Naive thymus-derived CD4-positive, alpha-beta T cell (primary cell): ENCODE measurements at regions of chr20 and their contacts with region 1.

Region 1: GRCh38 chr20:58236612-58237330 is 8.3 kb upstream of the ANKRD60 start:
- DNase-seq: peak; percentile 62 to 90 (median 80)
- ATAC-seq: peak; percentile 96
- H3K4me3 ChIP-seq: peak overlapping the region; percentile 65
- H3K4me3 Mint-ChIP-seq: peak overlapping the region; percentile 77 to 94 (median 92)
- H3K27ac ChIP-seq: peak overlapping the region; percentile 76
- H3K27ac Mint-ChIP-seq: peak overlapping the region; percentile 71 to 96 (median 91)
- H3K4me1 ChIP-seq: no peaks in the 10 kb centered on the region
- H3K4me1 Mint-ChIP-seq: peaks cover 2 to 25% (median 17%) of the 10 kb centered on the region in 7 donors
- H3K27me3 ChIP-seq: no peaks in the 10 kb centered on the region
- H3K27me3 Mint-ChIP-seq: no peaks in the 10 kb centered on the region

Region 2: GRCh38 chr20:58361481-58362205 is 124.9 kb after region 1 on chr20:
- CTCF ChIA-PET with region 1: no interaction called
- POLR2A ChIA-PET with region 1: no interaction called
- intact Hi-C with region 1: loop called in 1 of 2 experiments (anchors 5 kb)
- DNase-seq: no peak
- ATAC-seq: no peak
- H3K4me3 ChIP-seq: no peak overlapping the region
- H3K4me3 Mint-ChIP-seq: no peak overlapping the region
- H3K27ac ChIP-seq: no peak overlapping the region
- H3K27ac Mint-ChIP-seq: peak overlapping the region in 2 of 9 donors; percentile 6 to 52
- H3K4me1 ChIP-seq: no peaks in the 10 kb centered on the region
- H3K4me1 Mint-ChIP-seq: no peaks in the 10 kb centered on the region
- H3K27me3 ChIP-seq: no peaks in the 10 kb centered on the region
- H3K27me3 Mint-ChIP-seq: no peaks in the 10 kb centered on the region

Region 3: DNA sequence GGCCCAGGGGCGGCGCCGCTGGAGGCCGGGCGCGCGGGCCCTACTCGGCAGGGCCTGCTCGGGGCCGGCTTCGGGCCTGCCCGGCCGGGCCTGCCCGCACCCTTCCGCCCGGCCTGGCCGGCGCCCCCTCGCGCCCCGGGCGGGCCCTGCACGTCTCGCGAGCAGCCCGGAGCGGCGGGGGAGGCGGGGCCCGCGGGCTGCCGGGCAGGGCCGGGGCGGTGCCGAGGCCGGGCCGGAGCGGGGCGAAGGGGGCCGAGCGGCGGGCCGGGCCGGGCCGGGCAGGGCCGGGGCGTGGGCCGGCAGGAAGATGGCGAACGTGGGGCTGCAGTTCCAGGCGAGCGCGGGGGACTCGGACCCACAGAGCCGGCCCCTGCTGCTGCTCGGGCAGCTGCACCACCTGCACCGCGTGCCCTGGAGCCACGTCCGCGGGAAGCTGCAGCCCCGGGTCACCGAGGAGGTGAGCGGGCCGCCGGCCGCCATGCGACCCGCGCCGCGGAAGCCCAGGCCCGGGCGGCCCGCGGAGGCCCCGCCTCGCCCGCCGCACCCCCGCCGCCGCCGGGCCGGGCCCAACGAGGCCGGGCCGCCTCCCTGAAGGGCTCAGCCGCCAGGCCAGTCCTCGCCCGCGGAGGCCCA is 455.9 kb after region 1 on chr20 and contains the start of gene NPEPL1:
- CTCF ChIA-PET with region 1: no interaction called
- POLR2A ChIA-PET with region 1: interaction called, 3 read pairs
- intact Hi-C with region 1: loop called in 1 of 2 experiments (anchors 2 kb)
- DNase-seq: peak; percentile 37 to 85 (median 55)
- ATAC-seq: peak; percentile 93
- H3K4me3 ChIP-seq: peak within 1 kb of the TSS; percentile 19
- H3K4me3 Mint-ChIP-seq: peak within 1 kb of the TSS; percentile 58 to 89 (median 81)
- H3K27ac ChIP-seq: peak within 1 kb of the TSS; percentile 68
- H3K27ac Mint-ChIP-seq: peak within 1 kb of the TSS; percentile 63 to 87 (median 80)
- H3K4me1 ChIP-seq: peaks cover 4 to 7% of the 10 kb centered on the region in 2 donors
- H3K4me1 Mint-ChIP-seq: peaks cover 4 to 19% (median 10%) of the 10 kb centered on the region in 7 donors
- H3K27me3 ChIP-seq: no peaks in the 10 kb centered on the region
- H3K27me3 Mint-ChIP-seq: no peaks in the 10 kb centered on the region
- total RNA-seq, gene NPEPL1: 32.8 to 76.2 (median 50.5) TPM

Region 4: DNA sequence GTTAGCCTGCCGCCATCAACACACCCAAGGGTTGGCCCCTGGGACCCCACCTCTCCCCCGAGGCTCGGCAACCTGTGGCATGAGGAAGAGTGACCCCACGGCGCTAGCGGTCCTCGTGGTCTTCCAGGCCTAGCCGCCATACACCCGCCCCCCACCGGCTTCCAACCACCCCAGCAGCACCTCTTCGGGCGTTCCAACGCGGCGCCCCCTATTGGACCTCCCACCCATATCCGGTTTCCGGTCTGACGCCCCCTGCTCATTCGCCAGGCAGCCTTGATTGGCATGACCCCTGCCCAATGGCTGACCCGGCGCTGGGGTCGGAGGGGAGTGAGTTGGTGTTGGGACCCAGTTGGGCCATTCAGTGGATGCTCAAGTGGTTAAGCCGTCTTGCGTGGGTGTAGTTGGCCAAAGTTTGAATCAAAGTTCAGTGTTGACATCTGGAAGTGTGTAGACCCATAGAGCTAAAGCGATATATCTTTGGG is 614.0 kb after region 1 on chr20 and contains the start of gene GNAS-AS1:
- CTCF ChIA-PET with region 1: no interaction called
- POLR2A ChIA-PET with region 1: no interaction called
- intact Hi-C with region 1: loop called in 1 of 2 experiments (anchors 1 kb)
- DNase-seq: peak; percentile 57 to 81 (median 78)
- ATAC-seq: peak; percentile 87
- H3K4me3 ChIP-seq: peak within 1 kb of the TSS; percentile 61
- H3K4me3 Mint-ChIP-seq: peak within 1 kb of the TSS; percentile 83 to 95 (median 92)
- H3K27ac ChIP-seq: no peak within 1 kb of the TSS
- H3K27ac Mint-ChIP-seq: peak within 1 kb of the TSS in 4 of 9 donors; percentile 19 to 81 (median 54)
- H3K4me1 ChIP-seq: no peaks in the 10 kb centered on the region
- H3K4me1 Mint-ChIP-seq: peaks cover 11 to 36% (median 30%) of the 10 kb centered on the region in 7 donors
- H3K27me3 ChIP-seq: peaks cover 0 to 10% of the 10 kb centered on the region in 2 donors
- H3K27me3 Mint-ChIP-seq: peaks cover 21 to 67% (median 27%) of the 10 kb centered on the region in 5 donors
- total RNA-seq, gene GNAS-AS1: 0.13 to 2.0 (median 1.5) TPM

Region 5: DNA sequence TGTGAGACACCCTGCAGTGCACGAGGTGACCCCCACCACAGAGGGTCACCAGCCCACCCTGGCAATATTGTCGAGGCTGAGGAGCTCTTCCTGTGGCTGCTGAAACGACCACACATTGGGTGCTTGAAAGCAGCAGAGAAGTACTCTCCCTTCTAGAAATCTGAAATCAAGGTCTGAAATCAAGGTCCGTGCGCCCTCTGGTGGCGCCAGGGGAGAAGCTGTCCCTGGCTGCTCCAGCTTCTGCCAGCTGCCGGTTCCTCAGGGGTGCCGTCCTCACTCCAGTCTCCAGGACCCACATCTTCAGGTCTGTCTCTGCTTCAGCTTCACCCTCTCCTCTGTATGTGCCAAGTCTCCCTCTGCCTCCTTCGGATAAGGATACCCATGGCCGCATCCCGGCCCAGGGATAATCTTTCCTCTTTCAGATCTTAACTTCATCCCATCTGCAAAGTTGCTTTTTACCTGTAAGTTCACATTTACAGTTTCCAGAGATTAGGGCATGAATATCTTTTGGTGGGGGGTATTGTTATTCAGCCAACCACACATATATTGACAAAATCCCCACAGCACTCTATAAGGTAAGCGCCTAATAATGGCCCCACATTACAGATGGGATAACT is 1259.2 kb after region 1 on chr20:
- CTCF ChIA-PET with region 1: no interaction called
- POLR2A ChIA-PET with region 1: no interaction called
- intact Hi-C with region 1: loop called in 1 of 2 experiments (anchors 1 kb)
- DNase-seq: peak; percentile 41 to 71 (median 61)
- ATAC-seq: peak; percentile 77
- H3K4me3 ChIP-seq: no peak overlapping the region
- H3K4me3 Mint-ChIP-seq: no peak overlapping the region
- H3K27ac ChIP-seq: no peak overlapping the region
- H3K27ac Mint-ChIP-seq: no peak overlapping the region
- H3K4me1 ChIP-seq: no peaks in the 10 kb centered on the region
- H3K4me1 Mint-ChIP-seq: no peaks in the 10 kb centered on the region
- H3K27me3 ChIP-seq: no peaks in the 10 kb centered on the region
- H3K27me3 Mint-ChIP-seq: peaks cover 17 to 32% (median 25%) of the 10 kb centered on the region in 5 donors